PC-9 (cell line): ENCODE measurements at regions of chr5 and their contacts with region 1.

Region 1: DNA sequence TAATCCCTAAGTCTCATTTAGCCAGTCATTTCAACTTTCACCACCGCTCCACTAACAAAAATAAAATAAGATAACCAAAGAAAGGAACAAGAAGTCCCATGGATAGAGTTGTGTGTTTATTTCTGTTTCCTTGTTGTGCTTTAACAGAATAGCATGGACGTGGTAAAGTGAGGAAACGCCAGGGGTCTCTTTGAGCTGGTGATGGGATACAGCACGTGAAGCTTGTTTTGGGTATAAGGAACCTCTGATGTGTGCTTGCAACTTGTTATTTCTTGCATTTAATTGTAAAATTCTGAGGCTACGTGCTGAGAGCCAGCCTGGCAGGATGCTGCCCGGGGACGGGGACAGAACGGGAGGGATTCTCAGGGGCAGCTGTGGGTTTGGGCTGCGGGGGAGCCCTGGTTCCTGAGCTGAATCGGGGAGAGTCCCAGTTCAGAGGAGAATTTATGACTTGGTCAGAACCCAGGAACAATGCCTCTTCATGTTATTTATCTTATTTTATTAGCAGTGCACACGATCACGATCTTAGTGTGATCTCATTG is 63.4 kb downstream of the ANKRD33B start:
- DNase-seq: no peak
- H3K4me3 ChIP-seq: no peak overlapping the region
- H3K27ac ChIP-seq: peak overlapping the region; percentile 5; the same call in 1 of the 2 replicates
- H3K4me1 ChIP-seq: peaks cover 7% of the 10 kb centered on the region; the same call in 1 of the 2 replicates
- H3K27me3 ChIP-seq: no peaks in the 10 kb centered on the region
- CTCF ChIP-seq: no peak

Region 2: DNA sequence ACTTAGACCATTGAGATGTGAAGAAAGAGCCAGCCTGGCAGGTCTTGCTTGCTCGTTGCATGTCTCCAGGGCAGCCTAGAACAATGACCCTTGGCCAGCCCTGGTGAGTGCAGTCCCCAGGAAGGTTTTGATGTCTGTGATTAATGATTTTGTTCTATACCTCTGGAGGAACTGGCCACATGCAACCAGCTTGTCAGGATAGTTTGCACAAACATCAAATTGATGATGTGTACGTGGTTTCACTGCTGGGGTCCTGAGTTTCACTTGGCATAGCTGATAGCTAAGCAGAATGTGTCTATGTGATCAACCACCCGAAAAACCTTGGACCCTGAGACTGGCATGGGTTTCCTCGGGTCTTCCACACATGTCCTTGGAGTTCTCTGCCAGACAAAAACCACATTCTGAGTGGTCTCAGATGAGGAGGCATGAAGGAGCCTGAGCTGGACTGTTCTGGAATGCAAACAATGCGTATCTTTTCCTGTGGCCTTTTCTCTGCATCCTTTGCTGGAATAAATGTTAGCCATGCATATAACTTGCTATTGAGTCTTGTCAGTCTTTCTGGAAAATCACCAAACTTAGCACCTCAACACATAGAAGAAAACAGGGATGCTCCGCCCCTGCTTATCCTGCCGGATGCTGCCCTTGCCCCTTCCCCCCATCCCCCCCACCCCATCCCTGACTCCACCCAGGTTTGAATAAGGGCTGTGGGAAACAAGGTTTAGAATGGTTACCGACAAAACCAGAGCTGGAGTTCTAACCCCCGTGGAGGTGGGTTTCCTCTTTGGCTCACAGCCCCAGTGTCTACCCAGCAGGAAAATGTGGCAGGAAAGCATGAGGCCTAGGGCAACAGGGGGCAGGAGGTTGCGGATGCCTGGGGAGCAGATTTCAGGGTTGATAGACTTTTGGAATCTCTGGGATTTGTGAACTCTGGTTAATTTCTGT is 113.5 kb before region 1 on chr5:
- CTCF ChIA-PET with region 1: no interaction called
- POLR2A ChIA-PET with region 1: no interaction called
- intact Hi-C with region 1: loop called (anchors 1 kb)
- DNase-seq: peak; percentile 75 to 95
- H3K4me3 ChIP-seq: no peak overlapping the region
- H3K27ac ChIP-seq: peak overlapping the region; percentile 91
- H3K4me1 ChIP-seq: peaks cover 56% of the 10 kb centered on the region
- H3K27me3 ChIP-seq: no peaks in the 10 kb centered on the region
- CTCF ChIP-seq: no peak

Region 3: GRCh38 chr5:10563945-10564837 is 63.0 kb before region 1 on chr5 and contains the start of gene ANKRD33B:
- CTCF ChIA-PET with region 1: interaction called, 4 read pairs
- POLR2A ChIA-PET with region 1: interaction called, 3 read pairs
- intact Hi-C with region 1: loop called (anchors 1 kb)
- DNase-seq: peak; percentile 72 to 95
- H3K4me3 ChIP-seq: peak within 1 kb of the TSS; percentile 90
- H3K27ac ChIP-seq: peak within 1 kb of the TSS; percentile 86
- H3K4me1 ChIP-seq: peaks cover 46% of the 10 kb centered on the region
- H3K27me3 ChIP-seq: no peaks in the 10 kb centered on the region
- CTCF ChIP-seq: no peak
- total RNA-seq, gene ANKRD33B: 32.1 and 37.4 TPM in 2 replicates

Region 4: DNA sequence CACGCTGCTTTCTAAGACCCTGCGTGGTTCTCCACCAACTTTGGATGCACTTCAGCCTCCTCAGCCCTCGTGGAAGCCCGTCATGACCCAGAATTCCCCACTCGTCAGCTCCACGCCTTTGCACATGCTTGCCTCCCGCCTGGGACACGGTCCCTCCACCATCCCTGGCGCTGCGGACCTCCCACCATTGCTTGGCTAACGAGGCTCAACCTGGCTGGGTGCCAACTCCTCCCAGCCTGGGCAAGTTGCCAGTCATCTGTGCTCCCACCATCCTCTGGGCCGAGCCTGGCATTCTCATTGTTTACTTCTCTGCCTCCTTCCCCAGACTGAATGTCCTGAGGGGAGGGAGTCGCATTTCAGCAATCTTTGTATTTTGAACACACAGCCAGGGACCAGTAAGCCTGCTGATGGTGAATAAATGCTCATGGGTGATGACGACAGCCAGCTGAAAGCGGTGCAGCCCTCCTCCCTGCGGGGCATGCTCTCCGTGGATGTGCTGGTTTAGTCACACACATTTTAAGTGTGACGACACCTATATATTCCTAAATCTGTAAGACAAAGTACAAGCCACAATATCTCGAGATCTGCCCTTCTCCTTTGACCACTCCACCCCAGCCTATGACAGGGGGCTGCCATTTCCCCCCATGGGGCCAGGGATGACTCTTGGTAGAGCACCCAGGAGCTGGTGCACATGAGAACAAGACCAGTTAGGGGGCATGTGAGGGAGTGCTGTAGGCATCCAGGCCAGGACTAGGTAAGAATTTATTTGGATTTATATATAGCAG is 25.8 kb before region 1 on chr5:
- CTCF ChIA-PET with region 1: interaction called, 10 read pairs
- POLR2A ChIA-PET with region 1: no interaction called
- intact Hi-C with region 1: loop called (anchors 2 kb)
- DNase-seq: peak; percentile 93 to 99
- H3K4me3 ChIP-seq: peak overlapping the region; percentile 4; the same call in 1 of the 2 replicates
- H3K27ac ChIP-seq: peak overlapping the region; percentile 46
- H3K4me1 ChIP-seq: peaks cover 41% of the 10 kb centered on the region
- H3K27me3 ChIP-seq: no peaks in the 10 kb centered on the region
- CTCF ChIP-seq: no peak

Region 5: GRCh38 chr5:10607023-10607665 is 20.1 kb before region 1 on chr5:
- CTCF ChIA-PET with region 1: interaction called, 10 read pairs
- POLR2A ChIA-PET with region 1: no interaction called
- intact Hi-C with region 1: no loop called
- DNase-seq: no peak
- H3K4me3 ChIP-seq: no peak overlapping the region
- H3K27ac ChIP-seq: no peak overlapping the region
- H3K4me1 ChIP-seq: peaks cover 3% of the 10 kb centered on the region
- H3K27me3 ChIP-seq: no peaks in the 10 kb centered on the region
- CTCF ChIP-seq: no peak